Naive thymus-derived CD4-positive, alpha-beta T cell (primary cell): ENCODE measurements at regions of chr11 and their contacts with region 1.

Region 1: GRCh38 chr11:116772443-116773202 is at the start of gene BUD13:
- DNase-seq: peak; percentile 89 to 98 (median 93)
- ATAC-seq: peak; percentile 97
- H3K4me3 ChIP-seq: peak within 1 kb of the TSS; percentile 94
- H3K4me3 Mint-ChIP-seq: peak within 1 kb of the TSS; percentile 86 to 99 (median 96)
- H3K27ac ChIP-seq: peak within 1 kb of the TSS; percentile 93
- H3K27ac Mint-ChIP-seq: peak within 1 kb of the TSS; percentile 92 to 99 (median 97)
- H3K4me1 ChIP-seq: peaks cover 19 to 20% of the 10 kb centered on the region in 2 donors
- H3K4me1 Mint-ChIP-seq: peaks cover 25 to 53% (median 44%) of the 10 kb centered on the region in 7 donors
- H3K27me3 ChIP-seq: no peaks in the 10 kb centered on the region
- H3K27me3 Mint-ChIP-seq: no peaks in the 10 kb centered on the region
- total RNA-seq, gene BUD13: 10.3 to 32.0 (median 20.3) TPM

Region 2: DNA sequence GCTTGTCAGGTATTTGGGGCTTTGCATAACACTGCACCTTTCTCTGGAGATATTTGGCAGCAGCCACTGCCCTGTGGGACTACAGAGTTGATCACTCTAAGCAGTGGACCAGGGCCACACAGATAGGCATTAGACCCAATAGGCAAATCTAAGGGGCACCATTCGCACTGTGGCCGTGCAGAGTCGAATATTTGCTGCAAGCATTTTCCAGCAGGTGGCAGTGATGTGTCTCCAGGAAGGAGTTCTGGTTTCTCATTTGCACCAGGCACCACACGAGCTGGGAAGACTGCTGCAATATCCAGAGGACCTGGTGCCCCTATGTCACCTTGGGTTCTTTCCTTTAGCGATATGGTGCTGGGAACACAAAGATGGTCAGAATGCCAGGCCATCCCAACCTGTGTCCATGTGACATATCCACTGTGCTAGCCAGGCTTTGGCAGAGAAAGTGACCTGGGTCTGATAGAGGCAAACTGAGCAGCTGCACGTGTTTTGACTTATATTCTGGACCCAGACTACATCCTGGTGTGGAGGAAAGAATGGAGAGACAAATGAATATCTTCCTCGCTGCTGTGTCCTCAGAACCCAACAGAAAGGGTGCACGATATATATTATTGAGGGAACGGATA is 318.5 kb before region 1 on chr11:
- CTCF ChIA-PET with region 1: no interaction called
- POLR2A ChIA-PET with region 1: no interaction called
- intact Hi-C with region 1: no loop called
- DNase-seq: no peak
- ATAC-seq: no peak
- H3K4me3 ChIP-seq: no peak overlapping the region
- H3K4me3 Mint-ChIP-seq: no peak overlapping the region
- H3K27ac ChIP-seq: no peak overlapping the region
- H3K27ac Mint-ChIP-seq: no peak overlapping the region
- H3K4me1 ChIP-seq: no peaks in the 10 kb centered on the region
- H3K4me1 Mint-ChIP-seq: peaks cover 0 to 1% (median 0%) of the 10 kb centered on the region in 7 donors
- H3K27me3 ChIP-seq: no peaks in the 10 kb centered on the region
- H3K27me3 Mint-ChIP-seq: peaks cover 5 to 22% (median 12%) of the 10 kb centered on the region in 5 donors

Region 3: GRCh38 chr11:116648247-116649174 is 124.1 kb before region 1 on chr11:
- CTCF ChIA-PET with region 1: no interaction called
- POLR2A ChIA-PET with region 1: no interaction called
- intact Hi-C with region 1: no loop called
- DNase-seq: no peak
- ATAC-seq: no peak
- H3K4me3 ChIP-seq: no peak overlapping the region
- H3K4me3 Mint-ChIP-seq: no peak overlapping the region
- H3K27ac ChIP-seq: no peak overlapping the region
- H3K27ac Mint-ChIP-seq: no peak overlapping the region
- H3K4me1 ChIP-seq: no peaks in the 10 kb centered on the region
- H3K4me1 Mint-ChIP-seq: no peaks in the 10 kb centered on the region
- H3K27me3 ChIP-seq: no peaks in the 10 kb centered on the region
- H3K27me3 Mint-ChIP-seq: peaks cover 2 to 16% (median 5%) of the 10 kb centered on the region in 5 donors

Region 4: GRCh38 chr11:116835791-116836631 is 63.4 kb after region 1 on chr11:
- CTCF ChIA-PET with region 1: interaction called, 9 read pairs
- POLR2A ChIA-PET with region 1: interaction called, 6 read pairs
- intact Hi-C with region 1: loop called (anchors 1 kb)
- DNase-seq: peak; percentile 66 to 85 (median 80)
- ATAC-seq: peak; percentile 97
- H3K4me3 ChIP-seq: peak overlapping the region; percentile 71
- H3K4me3 Mint-ChIP-seq: peak overlapping the region; percentile 68 to 84 (median 80)
- H3K27ac ChIP-seq: peak overlapping the region; percentile 41
- H3K27ac Mint-ChIP-seq: peak overlapping the region in 6 of 9 donors; percentile 31 to 75 (median 50)
- H3K4me1 ChIP-seq: peaks cover 4 to 9% of the 10 kb centered on the region in 2 donors
- H3K4me1 Mint-ChIP-seq: peaks cover 4 to 17% (median 14%) of the 10 kb centered on the region in 7 donors
- H3K27me3 ChIP-seq: no peaks in the 10 kb centered on the region
- H3K27me3 Mint-ChIP-seq: peaks cover 0 to 4% (median 0%) of the 10 kb centered on the region in 5 donors

Region 5: GRCh38 chr11:117143871-117144476 is 371.4 kb after region 1 on chr11 and contains the start of gene PAFAH1B2:
- CTCF ChIA-PET with region 1: no interaction called
- POLR2A ChIA-PET with region 1: interaction called, 3 read pairs
- intact Hi-C with region 1: loop called in 1 of 2 experiments (anchors 1 kb)
- DNase-seq: peak; percentile 88 to 95 (median 94)
- ATAC-seq: peak; percentile 94
- H3K4me3 ChIP-seq: peak within 1 kb of the TSS; percentile 89
- H3K4me3 Mint-ChIP-seq: peak within 1 kb of the TSS; percentile 88 to 100 (median 97)
- H3K27ac ChIP-seq: peak within 1 kb of the TSS; percentile 85
- H3K27ac Mint-ChIP-seq: peak within 1 kb of the TSS; percentile 90 to 98 (median 97)
- H3K4me1 ChIP-seq: peaks cover 6 to 10% of the 10 kb centered on the region in 2 donors
- H3K4me1 Mint-ChIP-seq: peaks cover 28 to 57% (median 44%) of the 10 kb centered on the region in 7 donors
- H3K27me3 ChIP-seq: no peaks in the 10 kb centered on the region
- H3K27me3 Mint-ChIP-seq: peaks cover 11 to 24% (median 12%) of the 10 kb centered on the region in 5 donors
- total RNA-seq, gene PAFAH1B2: 48.9 to 62.0 (median 55.8) TPM

Region 6: DNA sequence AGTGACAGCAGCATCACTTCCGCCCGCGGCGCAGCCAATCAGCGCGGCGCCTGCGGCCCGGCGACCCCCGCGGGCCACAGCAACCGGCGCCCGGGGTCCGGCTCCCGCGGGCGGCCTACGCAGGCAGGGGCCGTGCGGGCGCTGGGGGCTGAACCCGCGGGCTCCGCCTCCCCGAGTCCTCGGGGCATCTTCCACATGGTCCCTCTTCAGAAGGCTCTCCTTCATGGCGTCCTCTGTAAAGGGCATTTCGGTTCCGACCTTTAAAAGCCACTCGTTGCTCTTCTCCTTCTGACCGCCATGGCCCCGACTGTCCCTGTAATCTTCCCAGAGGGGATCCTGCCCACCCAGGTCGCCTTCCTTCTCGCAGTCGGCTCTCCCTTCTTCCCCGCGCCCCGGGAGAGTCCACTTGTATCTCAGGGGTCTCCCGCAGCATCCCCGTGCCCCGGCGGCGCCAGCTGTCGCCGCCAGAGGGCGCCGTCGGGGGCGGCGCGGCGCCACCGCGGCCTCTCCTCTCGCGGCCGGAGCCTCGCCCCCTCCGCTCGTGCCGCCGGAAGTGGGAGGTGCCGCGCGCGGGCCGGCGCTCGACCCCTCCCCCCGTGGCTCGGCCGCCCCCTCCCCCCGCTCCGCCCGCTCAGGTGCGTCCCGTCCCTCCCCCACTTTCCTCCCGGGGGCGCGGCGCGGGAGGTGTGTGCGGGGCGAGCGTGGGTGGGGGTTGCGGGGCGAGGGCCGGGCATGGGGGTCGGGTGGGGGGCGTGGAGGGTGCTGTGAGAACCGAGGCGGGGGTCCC is 459.7 kb after region 1 on chr11 and contains the start of gene RNF214:
- CTCF ChIA-PET with region 1: no interaction called
- POLR2A ChIA-PET with region 1: interaction called, 9 read pairs
- intact Hi-C with region 1: loop called (anchors 1 to 2 kb)
- DNase-seq: peak; percentile 61 to 84 (median 73)
- ATAC-seq: peak; percentile 92
- H3K4me3 ChIP-seq: peak within 1 kb of the TSS; percentile 96
- H3K4me3 Mint-ChIP-seq: peak within 1 kb of the TSS; percentile 91 to 100 (median 98)
- H3K27ac ChIP-seq: peak within 1 kb of the TSS; percentile 97
- H3K27ac Mint-ChIP-seq: peak within 1 kb of the TSS; percentile 94 to 100 (median 99)
- H3K4me1 ChIP-seq: peaks cover 32 to 35% of the 10 kb centered on the region in 2 donors
- H3K4me1 Mint-ChIP-seq: peaks cover 40 to 55% (median 50%) of the 10 kb centered on the region in 7 donors
- H3K27me3 ChIP-seq: no peaks in the 10 kb centered on the region
- H3K27me3 Mint-ChIP-seq: no peaks in the 10 kb centered on the region
- total RNA-seq, gene RNF214: 16.6 to 36.0 (median 24.0) TPM